Caco-2 (cell line): ENCODE measurements at regions of chr19 and their contacts with region 1.

Region 1: GRCh38 chr19:39125554-39126311 is at the start of gene PAK4:
- DNase-seq: peak; percentile 98 to 99
- H3K4me3 ChIP-seq: peak within 1 kb of the TSS; percentile 86
- H3K4me3 Mint-ChIP-seq: peak within 1 kb of the TSS; percentile 94
- H3K27ac Mint-ChIP-seq: peak within 1 kb of the TSS; percentile 98
- H3K4me1 ChIP-seq: peaks cover 35% of the 10 kb centered on the region
- H3K4me1 Mint-ChIP-seq: peaks cover 42% of the 10 kb centered on the region
- H3K27me3 ChIP-seq: no peaks in the 10 kb centered on the region
- H3K27me3 Mint-ChIP-seq: no peaks in the 10 kb centered on the region
- CTCF ChIP-seq: peak in 1 of 2 experiments; percentile 13
- total RNA-seq, gene PAK4: 98.6 and 112 TPM in 2 replicates

Region 2: DNA sequence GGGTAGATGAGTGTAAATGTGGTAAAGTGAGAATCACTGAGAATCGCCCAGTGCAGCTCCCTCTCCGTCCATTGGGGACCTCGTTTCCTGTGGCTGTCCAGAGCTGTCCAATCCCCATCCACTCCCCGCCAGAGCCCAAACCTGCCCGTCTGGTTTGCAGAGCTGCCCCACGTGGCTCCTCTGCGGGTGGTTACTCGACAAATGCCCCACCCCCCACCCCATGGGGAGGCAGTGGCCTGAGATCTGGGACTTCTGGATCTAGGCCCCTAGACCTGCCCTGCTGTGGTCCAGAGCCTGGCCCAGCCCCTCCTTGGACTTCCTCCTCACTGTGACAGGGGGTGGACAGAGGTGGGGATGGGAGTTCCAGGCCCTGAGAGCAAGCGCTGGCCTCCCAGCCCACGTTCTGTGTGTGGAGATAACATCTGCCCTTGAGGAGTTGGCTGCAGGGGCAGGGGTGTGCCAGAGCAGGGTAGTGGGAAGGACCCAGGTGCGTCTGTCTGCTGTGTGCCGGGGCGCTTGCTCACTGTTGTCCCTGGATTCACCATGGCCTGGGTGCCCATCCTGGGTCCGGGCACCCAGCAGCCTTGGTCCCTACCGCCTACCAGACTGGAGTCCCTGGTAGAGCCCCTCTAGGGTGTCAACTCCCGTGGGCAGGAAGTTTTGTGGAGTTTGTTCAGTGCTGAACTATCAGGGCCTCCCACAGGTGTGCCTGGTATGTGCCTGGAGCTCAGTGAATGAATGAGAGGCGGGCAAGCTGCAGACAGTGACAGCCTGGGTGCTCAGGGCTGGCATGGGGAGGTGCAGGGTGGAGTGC is 29.1 kb after region 1 on chr19:
- CTCF ChIA-PET with region 1: interaction called, 3 read pairs
- POLR2A ChIA-PET with region 1: no interaction called
- intact Hi-C with region 1: loop called (anchors 2 kb)
- DNase-seq: peak; percentile 91 to 92
- H3K4me3 ChIP-seq: no peak overlapping the region
- H3K4me3 Mint-ChIP-seq: peak overlapping the region; percentile 60
- H3K27ac Mint-ChIP-seq: peak overlapping the region; percentile 91
- H3K4me1 ChIP-seq: peaks cover 63% of the 10 kb centered on the region
- H3K4me1 Mint-ChIP-seq: peaks cover 71% of the 10 kb centered on the region
- H3K27me3 ChIP-seq: no peaks in the 10 kb centered on the region
- H3K27me3 Mint-ChIP-seq: no peaks in the 10 kb centered on the region
- CTCF ChIP-seq: peak in 1 of 2 experiments; percentile 26

Region 3: DNA sequence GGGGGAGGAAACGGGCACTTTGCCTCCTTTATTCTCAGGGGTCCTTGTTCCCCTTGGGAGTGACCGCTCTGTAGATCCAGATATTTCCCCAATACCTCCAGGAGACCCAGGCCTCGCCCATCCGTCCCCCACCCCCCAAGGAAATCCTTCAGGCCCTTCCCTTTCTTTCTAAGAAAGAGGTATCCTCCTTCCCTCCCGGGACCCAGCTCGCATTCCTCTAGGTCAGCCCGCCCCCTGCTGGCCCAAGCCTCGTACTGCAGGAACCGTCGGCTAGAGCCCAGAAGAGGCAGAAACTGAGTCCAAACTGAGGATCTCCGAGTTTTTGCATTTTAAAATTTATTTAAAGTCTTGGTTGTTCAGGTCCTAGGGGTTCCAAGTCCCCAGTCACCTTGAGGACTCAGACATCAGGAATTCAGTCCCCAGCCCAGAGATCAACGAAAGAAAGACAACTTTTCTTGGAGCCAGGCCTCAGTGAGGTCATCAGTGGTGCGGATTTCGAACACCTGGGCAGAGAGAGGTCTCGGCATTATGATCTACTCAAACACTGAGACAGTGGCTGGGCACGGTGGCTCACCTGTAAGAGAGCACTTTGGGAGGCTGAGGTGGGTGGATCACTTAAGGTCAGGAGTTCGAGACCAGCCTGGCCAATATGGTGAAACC is 202.4 kb after region 1 on chr19:
- CTCF ChIA-PET with region 1: interaction called, 16 read pairs
- POLR2A ChIA-PET with region 1: no interaction called
- intact Hi-C with region 1: loop called (anchors 1 kb)
- DNase-seq: peak; percentile 83 to 93
- H3K4me3 ChIP-seq: no peak overlapping the region
- H3K4me3 Mint-ChIP-seq: no peak overlapping the region
- H3K27ac Mint-ChIP-seq: peak overlapping the region; percentile 75
- H3K4me1 ChIP-seq: peaks cover 13% of the 10 kb centered on the region
- H3K4me1 Mint-ChIP-seq: peaks cover 8% of the 10 kb centered on the region
- H3K27me3 ChIP-seq: no peaks in the 10 kb centered on the region
- H3K27me3 Mint-ChIP-seq: no peaks in the 10 kb centered on the region
- CTCF ChIP-seq: peak; percentile 98

Region 4: GRCh38 chr19:39397360-39398296 is 271.9 kb after region 1 on chr19:
- CTCF ChIA-PET with region 1: no interaction called
- POLR2A ChIA-PET with region 1: no interaction called
- intact Hi-C with region 1: loop called (anchors 5 kb)
- DNase-seq: peak; percentile 94 to 95
- H3K4me3 ChIP-seq: no peak overlapping the region
- H3K4me3 Mint-ChIP-seq: peak overlapping the region; percentile 49
- H3K27ac Mint-ChIP-seq: peak overlapping the region; percentile 84
- H3K4me1 ChIP-seq: peaks cover 52% of the 10 kb centered on the region
- H3K4me1 Mint-ChIP-seq: peaks cover 34% of the 10 kb centered on the region
- H3K27me3 ChIP-seq: no peaks in the 10 kb centered on the region
- H3K27me3 Mint-ChIP-seq: no peaks in the 10 kb centered on the region
- CTCF ChIP-seq: peak; percentile 98